ENCODE measurements at regions of chr18 and their contacts with region 1.

Region 1: DNA sequence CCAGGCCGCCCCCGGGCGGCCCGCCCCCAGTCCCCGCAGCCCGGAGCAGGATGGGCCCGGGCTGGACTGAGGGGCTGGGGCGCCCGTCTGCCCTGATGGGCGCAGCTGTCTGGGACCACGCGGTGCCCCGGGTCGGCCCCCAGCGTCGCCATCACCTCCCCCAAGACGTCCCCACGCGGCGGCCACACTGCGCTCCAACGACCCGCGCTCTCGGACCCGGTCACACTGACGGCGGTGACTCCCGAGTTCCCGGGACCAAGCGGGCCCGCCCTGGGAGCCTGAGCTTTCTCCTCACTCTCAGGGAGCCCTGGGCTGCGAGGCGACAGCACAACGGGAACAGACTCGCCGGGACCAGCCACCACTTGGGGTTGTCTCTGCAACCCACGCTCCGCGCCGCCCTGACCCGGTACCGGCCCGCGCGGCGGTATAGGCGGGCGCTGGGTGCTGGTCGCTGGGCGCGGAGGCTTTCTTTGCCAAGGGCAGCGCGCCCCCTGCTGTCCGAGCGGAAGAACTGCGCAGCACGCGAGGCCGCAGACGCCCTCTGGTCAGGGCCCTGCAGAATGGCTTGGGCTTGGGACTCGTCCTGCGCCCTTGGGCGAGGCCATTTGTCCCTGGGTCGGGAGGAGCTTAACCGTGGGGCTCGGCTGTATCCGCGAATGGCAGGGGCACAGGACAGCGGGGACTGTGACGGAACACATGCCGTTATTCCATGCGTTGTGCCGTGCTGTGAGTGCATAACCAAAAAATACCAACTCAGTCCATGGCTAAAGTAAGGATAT is 54.8 kb upstream of the ANKRD62 start:
- DNase-seq: peak; percentile 85
- ATAC-seq: peak; percentile 97
- H3K4me3 ChIP-seq: peak overlapping the region in 4 of 5 experiments; percentile 49 to 67 (median 56)
- H3K4me3 Mint-ChIP-seq: peak overlapping the region; percentile 82
- H3K27ac ChIP-seq: no peak overlapping the region
- H3K27ac Mint-ChIP-seq: no peak overlapping the region
- H3K4me1 ChIP-seq: peaks cover 15 to 20% of the 10 kb centered on the region in 2 donors
- H3K4me1 Mint-ChIP-seq: peaks cover 24% of the 10 kb centered on the region
- H3K27me3 ChIP-seq: peaks cover 0 to 13% (median 2%) of the 10 kb centered on the region in 4 experiments
- H3K27me3 Mint-ChIP-seq: peaks cover 3% of the 10 kb centered on the region
- CTCF ChIP-seq: peak; percentile 99

Region 2: DNA sequence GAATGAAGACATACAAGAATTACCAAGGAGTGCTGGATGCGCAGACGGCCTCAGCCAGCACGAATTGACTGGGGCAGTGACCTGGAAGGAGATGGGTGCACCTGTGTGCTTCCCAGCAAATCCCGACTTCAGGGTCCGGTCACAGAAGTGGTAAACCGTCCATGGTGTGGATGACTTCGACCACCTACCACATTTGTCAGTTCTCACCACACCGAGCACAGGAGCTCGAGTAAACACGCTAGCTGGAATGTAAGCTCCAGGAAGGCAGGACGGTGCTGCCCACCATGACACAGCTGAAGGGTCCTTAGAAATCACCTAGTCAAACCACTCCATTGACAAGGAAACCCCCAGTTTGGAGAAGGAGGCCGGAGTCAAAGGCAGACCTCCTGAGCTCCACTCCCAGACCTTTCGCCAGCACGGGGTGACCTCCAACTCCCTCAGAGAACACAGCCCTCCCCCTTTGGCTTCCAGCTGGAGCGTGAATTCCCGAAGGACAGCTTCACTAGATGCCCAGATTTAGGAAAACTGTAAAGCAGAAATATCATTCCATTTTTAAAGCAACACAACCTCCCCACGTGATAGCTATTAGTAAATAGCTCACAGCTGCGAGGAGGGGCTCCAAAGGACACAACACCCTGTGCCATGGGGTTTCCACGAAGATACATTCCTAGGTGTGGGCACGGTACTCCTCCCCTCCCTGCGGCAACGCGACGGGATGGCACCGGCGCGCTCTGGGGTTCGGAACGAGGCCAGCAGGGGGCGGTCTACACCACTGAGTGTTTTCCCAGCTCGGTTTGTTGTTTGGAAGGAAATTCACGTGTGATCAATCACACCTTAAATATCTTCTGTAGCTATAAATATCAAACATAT is 383.9 kb before region 1 on chr18:
- CTCF ChIA-PET with region 1: interaction called, 31 read pairs
- POLR2A ChIA-PET with region 1: no interaction called
- intact Hi-C with region 1: no loop called
- DNase-seq: peak; percentile 44
- ATAC-seq: no peak
- H3K4me3 ChIP-seq: no peak overlapping the region
- H3K4me3 Mint-ChIP-seq: no peak overlapping the region
- H3K27ac ChIP-seq: no peak overlapping the region
- H3K27ac Mint-ChIP-seq: no peak overlapping the region
- H3K4me1 ChIP-seq: peaks cover 0 to 3% of the 10 kb centered on the region in 2 donors
- H3K4me1 Mint-ChIP-seq: peaks cover 4% of the 10 kb centered on the region
- H3K27me3 ChIP-seq: peaks cover 0 to 16% (median 2%) of the 10 kb centered on the region in 4 experiments
- H3K27me3 Mint-ChIP-seq: peaks cover 52% of the 10 kb centered on the region
- CTCF ChIP-seq: peak; percentile 62

Region 3: GRCh38 chr18:11767935-11768334 is 270.9 kb before region 1 on chr18:
- CTCF ChIA-PET with region 1: no interaction called
- POLR2A ChIA-PET with region 1: no interaction called
- intact Hi-C with region 1: no loop called
- DNase-seq: no peak
- ATAC-seq: no peak
- H3K4me3 ChIP-seq: no peak overlapping the region
- H3K4me3 Mint-ChIP-seq: no peak overlapping the region
- H3K27ac ChIP-seq: no peak overlapping the region
- H3K27ac Mint-ChIP-seq: no peak overlapping the region
- H3K4me1 ChIP-seq: no peaks in the 10 kb centered on the region
- H3K4me1 Mint-ChIP-seq: no peaks in the 10 kb centered on the region
- H3K27me3 ChIP-seq: peaks cover 0 to 3% (median 0%) of the 10 kb centered on the region in 4 experiments
- H3K27me3 Mint-ChIP-seq: peaks cover 8% of the 10 kb centered on the region
- CTCF ChIP-seq: no peak

Region 4: GRCh38 chr18:11989973-11990380 is 48.9 kb before region 1 on chr18:
- CTCF ChIA-PET with region 1: interaction called, 19 read pairs
- POLR2A ChIA-PET with region 1: no interaction called
- intact Hi-C with region 1: no loop called
- DNase-seq: no peak
- ATAC-seq: no peak
- H3K4me3 ChIP-seq: no peak overlapping the region
- H3K4me3 Mint-ChIP-seq: no peak overlapping the region
- H3K27ac ChIP-seq: no peak overlapping the region
- H3K27ac Mint-ChIP-seq: no peak overlapping the region
- H3K4me1 ChIP-seq: no peaks in the 10 kb centered on the region
- H3K4me1 Mint-ChIP-seq: no peaks in the 10 kb centered on the region
- H3K27me3 ChIP-seq: no peaks in the 10 kb centered on the region
- H3K27me3 Mint-ChIP-seq: no peaks in the 10 kb centered on the region
- CTCF ChIP-seq: no peak

Region 5: GRCh38 chr18:12028674-12029073 is 10.2 kb before region 1 on chr18:
- CTCF ChIA-PET with region 1: interaction called, 10 read pairs
- POLR2A ChIA-PET with region 1: no interaction called
- intact Hi-C with region 1: no loop called
- DNase-seq: no peak
- ATAC-seq: no peak
- H3K4me3 ChIP-seq: no peak overlapping the region
- H3K4me3 Mint-ChIP-seq: no peak overlapping the region
- H3K27ac ChIP-seq: no peak overlapping the region
- H3K27ac Mint-ChIP-seq: no peak overlapping the region
- H3K4me1 ChIP-seq: peaks cover 0 to 7% of the 10 kb centered on the region in 2 donors
- H3K4me1 Mint-ChIP-seq: peaks cover 7% of the 10 kb centered on the region
- H3K27me3 ChIP-seq: no peaks in the 10 kb centered on the region
- H3K27me3 Mint-ChIP-seq: no peaks in the 10 kb centered on the region
- CTCF ChIP-seq: no peak

Measured in B cell (primary cell).